ENCODE measurements at regions of chr10 and their contacts with region 1.

Region 1: GRCh38 chr10:99620713-99621453 is 644 bp upstream of the SLC25A28 start:
- DNase-seq: peak; percentile 90
- ATAC-seq: peak; percentile 92
- H3K4me3 Mint-ChIP-seq: peak overlapping the region; percentile 81
- H3K27ac Mint-ChIP-seq: peak overlapping the region; percentile 91
- H3K4me1 Mint-ChIP-seq: peaks cover 30% of the 10 kb centered on the region
- H3K27me3 Mint-ChIP-seq: peaks cover 3% of the 10 kb centered on the region; the same call in 1 of the 2 replicates
- CTCF ChIP-seq: no peak

Region 2: GRCh38 chr10:99659031-99659867 is 38.4 kb after region 1 on chr10 and contains the start of gene ENTPD7:
- CTCF ChIA-PET with region 1: interaction called, 11 read pairs
- POLR2A ChIA-PET with region 1: interaction called, 11 read pairs
- DNase-seq: peak; percentile 97
- ATAC-seq: peak; percentile 99
- H3K4me3 Mint-ChIP-seq: peak within 1 kb of the TSS; percentile 92
- H3K27ac Mint-ChIP-seq: peak within 1 kb of the TSS; percentile 73
- H3K4me1 Mint-ChIP-seq: peaks cover 18% of the 10 kb centered on the region
- H3K27me3 Mint-ChIP-seq: peaks cover 31% of the 10 kb centered on the region
- CTCF ChIP-seq: no peak
- total RNA-seq, gene ENTPD7: 10.2 to 11.4 TPM (median 11.2 TPM) in 3 replicates

Measured in WTC11 (cell line).